ENCODE measurements at regions of chr3 and their contacts with region 1.

Region 1: GRCh38 chr3:112582244-112582874 is 20.5 kb downstream of the SLC35A5 start:
- DNase-seq: no peak
- H3K4me3 ChIP-seq: no peak overlapping the region
- H3K27ac ChIP-seq: no peak overlapping the region
- H3K4me1 ChIP-seq: peaks cover 0 to 7% (median 0%) of the 10 kb centered on the region in 3 donors
- H3K27me3 ChIP-seq: no peaks in the 10 kb centered on the region
- CTCF ChIP-seq: peak in 4 of 6 experiments; percentile 45 to 68 (median 52)
- POLR2A ChIP-seq: no peak

Region 2: GRCh38 chr3:112822069-112823055 is 240.0 kb after region 1 on chr3:
- intact Hi-C with region 1: loop called (anchors 10 kb)
- DNase-seq: no peak
- H3K4me3 ChIP-seq: no peak overlapping the region
- H3K27ac ChIP-seq: no peak overlapping the region
- H3K4me1 ChIP-seq: no peaks in the 10 kb centered on the region
- H3K27me3 ChIP-seq: no peaks in the 10 kb centered on the region
- CTCF ChIP-seq: no peak
- POLR2A ChIP-seq: no peak

Measured in esophagus squamous epithelium (tissue), 5 donors.